ENCODE measurements at regions of chr17 and their contacts with region 1.

Region 1: DNA sequence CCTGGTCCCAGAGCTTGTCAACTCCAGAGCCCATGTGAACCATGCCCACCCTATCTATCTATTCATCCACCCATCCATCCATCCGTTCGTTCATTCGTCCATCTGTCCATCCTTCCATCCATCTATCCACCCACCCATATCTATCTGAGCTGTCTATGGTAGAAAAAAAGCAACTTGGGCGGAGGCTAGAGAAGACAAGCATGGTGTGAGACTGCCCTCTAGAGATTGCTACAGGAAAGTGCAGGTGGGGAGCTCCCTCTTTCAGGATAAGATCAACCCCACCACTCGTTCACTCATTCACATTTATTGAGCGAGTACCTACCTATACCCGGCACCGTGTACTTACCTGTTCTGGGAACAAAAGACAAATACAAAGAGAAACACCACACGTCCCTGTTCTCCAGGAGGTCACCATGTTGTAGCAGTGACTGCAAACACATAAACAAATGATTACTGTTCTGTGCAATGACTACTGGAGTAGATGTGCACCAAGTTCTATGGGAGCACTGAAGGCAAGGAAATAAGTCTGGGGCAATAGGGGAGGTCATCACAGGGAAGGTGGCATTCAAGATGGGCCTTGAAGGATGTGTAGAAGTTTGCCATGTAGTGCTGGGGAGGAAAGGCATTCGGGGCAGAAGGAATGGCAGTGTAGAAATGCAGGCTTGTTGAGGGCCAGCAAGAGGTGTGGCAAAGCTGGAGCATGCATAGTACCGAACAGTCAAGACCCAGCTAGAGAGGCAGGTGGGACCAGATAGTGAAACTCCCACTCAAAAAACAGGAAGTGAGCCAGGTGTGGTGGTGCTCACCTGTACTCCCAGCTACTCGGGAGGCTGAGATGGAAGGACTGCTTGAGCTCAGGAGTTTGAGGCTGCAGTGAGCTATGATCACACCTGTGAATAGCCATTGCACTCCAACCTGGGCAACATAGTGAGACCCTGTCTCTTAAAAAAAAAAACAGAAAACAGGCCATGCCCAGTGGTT is 13.4 kb upstream of the ATP5MC1 start:
- DNase-seq: peak in 1 of 2 experiments; percentile 61
- H3K4me3 ChIP-seq: no peak overlapping the region
- H3K27ac ChIP-seq: no peak overlapping the region
- H3K4me1 ChIP-seq: no peaks in the 10 kb centered on the region
- H3K27me3 ChIP-seq: no peaks in the 10 kb centered on the region; a peak in 1 of 7 replicates
- CTCF ChIP-seq: peak; percentile 59 to 99 (median 91)
- EP300 ChIP-seq: no peak
- POLR2A ChIP-seq: no peak
- RAD21 ChIP-seq: peak; percentile 98 to 99

Region 2: DNA sequence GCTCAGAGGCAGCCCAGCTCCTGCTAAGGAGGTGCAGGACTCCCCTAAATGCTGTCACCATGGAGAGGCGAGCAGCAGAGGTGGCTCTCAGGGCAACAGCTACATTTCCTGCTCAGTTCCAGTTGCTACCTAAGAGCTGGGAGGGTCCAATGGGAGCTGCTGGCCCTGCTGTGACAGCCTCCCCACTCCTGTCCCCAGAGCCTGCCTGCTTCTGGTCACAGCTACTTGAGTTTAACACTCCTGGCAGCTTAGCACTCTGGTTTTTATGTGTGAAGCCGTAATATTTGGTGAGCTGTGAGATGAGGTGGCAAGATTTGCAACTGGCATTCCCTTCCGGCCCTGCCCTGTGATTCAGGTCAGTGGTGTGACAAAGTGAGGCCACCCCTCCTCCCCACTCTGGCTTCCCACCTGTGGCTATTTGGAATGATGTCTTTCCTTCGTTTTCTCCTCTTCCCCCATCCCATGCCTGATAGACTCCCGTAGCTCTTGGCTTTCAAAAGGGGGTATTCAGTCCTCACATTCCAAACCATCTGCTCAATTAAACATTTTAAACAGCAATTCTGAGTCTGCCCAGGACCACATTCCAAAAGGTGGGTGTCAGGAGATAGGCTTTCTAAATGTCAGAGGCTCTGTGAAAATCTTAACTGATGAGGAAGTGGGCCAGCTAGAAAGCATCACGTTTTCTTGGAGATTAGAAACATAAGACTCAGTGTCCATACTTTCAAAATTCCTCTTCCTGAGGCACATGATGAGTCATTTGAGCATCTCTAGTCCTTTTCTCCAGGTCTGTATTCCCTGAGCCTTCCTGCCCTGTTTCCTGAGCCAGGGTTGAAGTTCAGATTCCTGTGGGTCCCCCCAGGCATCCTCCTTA is 406.6 kb before region 1 on chr17:
- CTCF ChIA-PET with region 1: no interaction called
- POLR2A ChIA-PET with region 1: no interaction called
- DNase-seq: no peak
- H3K4me3 ChIP-seq: no peak overlapping the region
- H3K27ac ChIP-seq: no peak overlapping the region
- H3K4me1 ChIP-seq: peaks cover 4 to 14% (median 12%) of the 10 kb centered on the region in 4 experiments; a peak in 6 of 7 replicates
- H3K27me3 ChIP-seq: 0 out of 7 replicates have a peak, but pooled peaks cover 0 to 2% (median 0%) of the 10 kb centered on the region in 4 experiments
- CTCF ChIP-seq: no peak
- EP300 ChIP-seq: no peak
- POLR2A ChIP-seq: no peak
- RAD21 ChIP-seq: no peak

Region 3: GRCh38 chr17:48671697-48672171 is 207.5 kb before region 1 on chr17:
- CTCF ChIA-PET with region 1: interaction called, 88 read pairs
- POLR2A ChIA-PET with region 1: interaction called, 6 read pairs
- DNase-seq: peak; percentile 13 to 93
- H3K4me3 ChIP-seq: peak overlapping the region in 3 of 4 experiments; percentile 16 to 49 (median 32); a peak in 4 of 8 replicates
- H3K27ac ChIP-seq: no peak overlapping the region
- H3K4me1 ChIP-seq: no peaks in the 10 kb centered on the region; a peak in 1 of 7 replicates
- H3K27me3 ChIP-seq: peaks cover 0 to 9% (median 5%) of the 10 kb centered on the region in 4 experiments; a peak in 4 of 7 replicates
- CTCF ChIP-seq: peak; percentile 71 to 92 (median 84)
- EP300 ChIP-seq: no peak
- POLR2A ChIP-seq: no peak
- RAD21 ChIP-seq: peak; percentile 93 to 95

Region 4: GRCh38 chr17:48767263-48767774 is 111.9 kb before region 1 on chr17:
- CTCF ChIA-PET with region 1: interaction called, 11 read pairs
- POLR2A ChIA-PET with region 1: no interaction called
- DNase-seq: no peak
- H3K4me3 ChIP-seq: no peak overlapping the region
- H3K27ac ChIP-seq: no peak overlapping the region
- H3K4me1 ChIP-seq: no peaks in the 10 kb centered on the region
- H3K27me3 ChIP-seq: peaks cover under 1 to 4% (median 2%) of the 10 kb centered on the region in 4 experiments; a peak in 5 of 7 replicates
- CTCF ChIP-seq: peak in 1 of 3 experiments; percentile 12; a peak in 1 of 4 replicates
- EP300 ChIP-seq: no peak
- POLR2A ChIP-seq: no peak
- RAD21 ChIP-seq: no peak

Region 5: DNA sequence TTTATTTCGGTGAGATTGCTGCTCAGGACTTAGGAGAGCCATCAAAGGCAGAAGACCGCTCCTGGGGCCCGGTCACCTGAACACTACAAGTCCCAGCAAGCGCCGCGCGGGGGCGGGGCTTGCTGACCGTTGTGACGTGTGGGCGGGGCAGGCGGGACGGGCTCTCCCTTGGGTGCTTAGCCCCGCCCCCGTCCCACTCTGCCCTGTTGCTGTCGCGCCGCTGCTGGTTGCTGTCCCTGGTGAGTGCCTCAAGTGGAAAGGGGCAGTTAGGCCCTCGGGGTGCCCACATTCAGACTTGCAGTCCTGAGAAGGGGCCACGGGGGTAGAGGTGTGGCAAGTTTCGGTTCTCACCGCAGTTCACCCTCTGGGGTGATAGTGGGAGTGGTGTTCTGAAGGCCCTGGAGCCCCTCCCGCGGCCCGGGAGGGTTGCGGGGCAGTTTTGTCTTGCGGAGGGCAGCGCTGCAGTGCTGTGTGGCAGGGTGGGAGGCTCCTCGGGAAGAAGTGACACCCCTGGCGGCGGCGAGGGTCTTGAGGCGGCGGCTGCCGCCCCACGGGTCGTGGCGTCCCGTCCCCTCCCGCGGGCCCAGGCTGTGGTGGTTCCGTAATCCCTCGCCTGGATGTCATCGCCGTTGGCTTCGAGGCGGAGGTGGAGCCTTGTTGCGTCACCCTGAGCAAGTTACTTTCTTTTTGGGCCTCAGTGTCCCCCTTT is 48.2 kb before region 1 on chr17 and contains the start of gene CALCOCO2:
- CTCF ChIA-PET with region 1: interaction called, 2,590 read pairs
- POLR2A ChIA-PET with region 1: no interaction called
- DNase-seq: peak; percentile 60 to 87
- H3K4me3 ChIP-seq: peak within 1 kb of the TSS; percentile 50 to 96 (median 76)
- H3K27ac ChIP-seq: no peak within 1 kb of the TSS
- H3K4me1 ChIP-seq: peaks cover 0 to 4% (median 0%) of the 10 kb centered on the region in 4 experiments; a peak in 2 of 7 replicates
- H3K27me3 ChIP-seq: no peaks in the 10 kb centered on the region
- CTCF ChIP-seq: no peak
- EP300 ChIP-seq: no peak
- POLR2A ChIP-seq: no peak
- RAD21 ChIP-seq: no peak
- total RNA-seq, gene CALCOCO2: 27.7 and 31.8 TPM in 2 replicates

Region 6: GRCh38 chr17:48928876-48929811 is 49.9 kb after region 1 on chr17:
- CTCF ChIA-PET with region 1: no interaction called
- POLR2A ChIA-PET with region 1: no interaction called
- DNase-seq: no peak
- H3K4me3 ChIP-seq: no peak overlapping the region
- H3K27ac ChIP-seq: no peak overlapping the region
- H3K4me1 ChIP-seq: no peaks in the 10 kb centered on the region
- H3K27me3 ChIP-seq: no peaks in the 10 kb centered on the region
- CTCF ChIP-seq: no peak
- EP300 ChIP-seq: no peak
- POLR2A ChIP-seq: no peak; a peak in 1 of 3 replicates
- RAD21 ChIP-seq: no peak

Measured in H1 (cell line).